ENCODE measurements at regions of chr13 and their contacts with region 1.

Region 1: DNA sequence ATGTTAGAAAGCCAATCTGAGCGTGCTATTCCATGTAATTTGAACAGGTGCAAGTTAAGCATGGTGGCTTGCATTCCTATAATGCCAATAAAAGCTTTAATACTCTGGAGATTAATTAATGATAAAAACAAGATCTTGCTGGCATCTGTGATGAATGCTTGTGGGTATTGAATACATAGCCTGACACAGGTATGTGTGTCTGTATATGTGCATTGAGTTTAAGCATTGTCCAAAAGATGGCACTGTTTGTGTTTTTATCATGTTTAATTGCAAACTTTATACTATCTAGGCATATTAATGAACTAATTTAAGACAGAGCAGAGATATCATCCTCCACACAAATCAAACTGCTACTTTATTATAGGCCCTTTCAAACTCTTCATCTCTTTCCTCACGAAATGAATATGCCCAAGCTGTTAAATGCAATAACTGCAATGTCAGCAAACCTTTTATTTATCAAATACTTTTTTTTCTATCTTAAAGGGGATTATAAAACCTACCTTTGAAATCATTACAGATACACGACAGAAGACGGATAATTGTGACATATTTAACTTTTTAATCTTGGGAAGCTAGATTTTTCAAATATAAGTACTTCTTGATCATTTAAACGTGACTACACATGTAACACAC is 86.5 kb downstream of the TNFSF11 start:
- DNase-seq: peak; percentile 31
- H3K4me3 Mint-ChIP-seq: no peak overlapping the region
- H3K27ac Mint-ChIP-seq: no peak overlapping the region
- H3K4me1 Mint-ChIP-seq: no peaks in the 10 kb centered on the region
- H3K27me3 Mint-ChIP-seq: peaks cover 39% of the 10 kb centered on the region
- CTCF ChIP-seq: peak; percentile 35

Region 2: DNA sequence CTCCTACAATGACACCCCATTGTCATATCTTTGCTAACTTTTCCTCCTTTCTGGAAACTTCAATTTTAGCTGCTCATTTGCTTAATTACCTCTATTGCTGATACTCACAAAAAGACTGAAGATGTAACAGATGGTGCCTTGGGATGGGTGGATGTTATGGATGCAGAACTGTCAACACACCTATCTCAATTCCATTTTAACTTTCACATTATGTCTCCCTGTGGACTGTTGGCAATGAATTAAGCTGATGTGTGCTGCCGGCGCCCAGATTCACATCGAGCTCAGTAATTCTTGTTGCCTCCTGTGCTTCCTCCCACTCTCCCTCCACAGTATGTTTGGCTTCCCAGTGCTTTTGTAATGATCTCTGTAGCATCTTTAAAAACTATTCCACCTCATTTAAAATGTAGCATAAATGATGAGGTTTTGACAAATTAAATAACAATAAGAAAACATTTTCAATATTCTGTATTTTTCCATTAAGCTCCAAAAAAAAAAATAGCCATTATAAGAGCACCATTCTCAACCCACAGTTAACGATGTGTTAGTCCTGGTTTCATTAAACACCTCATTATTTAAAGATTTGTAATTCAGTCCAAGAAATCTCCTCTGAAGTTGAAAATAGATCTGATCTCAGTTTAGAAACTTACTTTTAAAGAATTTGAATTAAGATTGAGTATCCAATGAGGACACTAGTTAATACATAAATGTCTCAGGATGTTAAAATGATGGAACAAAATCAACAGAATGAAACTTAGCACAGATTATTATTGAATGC is 21.1 kb after region 1 on chr13:
- CTCF ChIA-PET with region 1: interaction called, 10 read pairs
- POLR2A ChIA-PET with region 1: no interaction called
- intact Hi-C with region 1: no loop called
- DNase-seq: no peak
- H3K4me3 Mint-ChIP-seq: no peak overlapping the region
- H3K27ac Mint-ChIP-seq: no peak overlapping the region
- H3K4me1 Mint-ChIP-seq: no peaks in the 10 kb centered on the region
- H3K27me3 Mint-ChIP-seq: peaks cover 15% of the 10 kb centered on the region
- CTCF ChIP-seq: no peak

Region 3: GRCh38 chr13:43085545-43085944 is 425.1 kb after region 1 on chr13:
- CTCF ChIA-PET with region 1: interaction called, 3 read pairs
- POLR2A ChIA-PET with region 1: no interaction called
- intact Hi-C with region 1: loop called (anchors 10 kb)
- DNase-seq: peak; percentile 46
- H3K4me3 Mint-ChIP-seq: no peak overlapping the region
- H3K27ac Mint-ChIP-seq: no peak overlapping the region
- H3K4me1 Mint-ChIP-seq: peaks cover 16% of the 10 kb centered on the region
- H3K27me3 Mint-ChIP-seq: no peaks in the 10 kb centered on the region
- CTCF ChIP-seq: peak; percentile 32

Region 4: GRCh38 chr13:43878892-43879754 is 1218.7 kb after region 1 on chr13 and contains the start of gene CCDC122:
- CTCF ChIA-PET with region 1: interaction called, 6 read pairs
- POLR2A ChIA-PET with region 1: no interaction called
- intact Hi-C with region 1: loop called (anchors 5 kb)
- DNase-seq: peak; percentile 83
- H3K4me3 Mint-ChIP-seq: peak within 1 kb of the TSS; percentile 93
- H3K27ac Mint-ChIP-seq: peak within 1 kb of the TSS; percentile 98
- H3K4me1 Mint-ChIP-seq: peaks cover 23% of the 10 kb centered on the region
- H3K27me3 Mint-ChIP-seq: no peaks in the 10 kb centered on the region
- CTCF ChIP-seq: no peak
- total RNA-seq, gene CCDC122: 15.7 and 16.3 TPM in 2 replicates

Measured in MCF 10A (cell line).